ENCODE measurements at regions of chr1 and their contacts with region 1.

Region 1: GRCh38 chr1:58576727-58577653 is at the start of gene TACSTD2:
- DNase-seq: peak; percentile 99
- H3K4me3 ChIP-seq: peak within 1 kb of the TSS; percentile 65 to 93 (median 82)
- H3K27ac ChIP-seq: peak within 1 kb of the TSS; percentile 99
- H3K4me1 ChIP-seq: peaks cover 46% of the 10 kb centered on the region
- H3K27me3 ChIP-seq: no peaks in the 10 kb centered on the region
- CTCF ChIP-seq: no peak
- total RNA-seq, gene TACSTD2: 231 to 244 TPM

Region 2: GRCh38 chr1:58515794-58516401 is 61.1 kb before region 1 on chr1:
- CTCF ChIA-PET with region 1: no interaction called
- dilution Hi-C with region 1: no loop called
- in situ Hi-C with region 1: no loop called
- intact Hi-C with region 1: loop called (anchors 2 kb)
- DNase-seq: peak; percentile 51
- H3K4me3 ChIP-seq: no peak overlapping the region
- H3K27ac ChIP-seq: no peak overlapping the region
- H3K4me1 ChIP-seq: no peaks in the 10 kb centered on the region
- H3K27me3 ChIP-seq: no peaks in the 10 kb centered on the region
- CTCF ChIP-seq: peak; percentile 46 to 60

Measured in mammary epithelial cell (primary cell).